CD8-positive, alpha-beta T cell (primary cell): ENCODE measurements at regions of chr12 and their contacts with region 1.

Region 1: GRCh38 chr12:84502907-84503787 is 409.5 kb downstream of the SLC6A15 start:
- DNase-seq: peak in 2 of 9 experiments; percentile 2 to 6
- ATAC-seq: no peak
- H3K4me3 ChIP-seq: no peak overlapping the region
- H3K4me3 Mint-ChIP-seq: no peak overlapping the region
- H3K27ac ChIP-seq: no peak overlapping the region
- H3K27ac Mint-ChIP-seq: no peak overlapping the region
- H3K4me1 ChIP-seq: no peaks in the 10 kb centered on the region
- H3K4me1 Mint-ChIP-seq: no peaks in the 10 kb centered on the region
- H3K27me3 ChIP-seq: no peaks in the 10 kb centered on the region
- H3K27me3 Mint-ChIP-seq: no peaks in the 10 kb centered on the region
- CTCF ChIP-seq: no peak

Region 2: DNA sequence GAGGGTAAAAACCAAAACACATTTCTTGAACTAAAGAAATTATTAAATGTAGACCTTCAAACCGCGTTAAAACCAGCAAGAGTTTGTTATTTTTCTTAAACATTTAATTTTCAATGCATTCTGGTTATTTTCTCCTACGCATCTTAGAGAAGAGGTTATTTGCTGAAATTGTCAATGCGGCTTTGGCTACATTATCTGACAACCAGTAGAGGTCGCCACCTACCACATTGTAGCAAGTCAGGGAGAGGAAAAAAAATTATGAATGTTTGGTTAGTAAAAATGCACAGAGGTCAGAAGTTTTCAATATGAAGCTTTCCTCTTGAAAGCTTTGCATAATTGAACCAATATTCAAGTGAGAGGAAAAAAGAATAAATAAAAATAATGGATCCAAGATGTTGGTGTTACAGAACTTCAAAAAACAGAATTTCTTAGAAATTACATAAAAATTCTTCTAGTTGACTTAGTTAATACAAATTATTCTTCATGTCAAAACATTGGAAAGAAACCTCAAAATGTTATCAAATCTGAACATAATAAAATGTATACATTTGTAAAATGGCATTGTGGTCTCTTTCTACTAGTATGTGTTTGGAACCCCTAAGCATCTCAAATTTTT is 1975.9 kb before region 1 on chr12:
- CTCF ChIA-PET with region 1: no interaction called
- POLR2A ChIA-PET with region 1: no interaction called
- intact Hi-C with region 1: loop called in 1 of 2 experiments (anchors 10 kb)
- DNase-seq: peak in 2 of 9 experiments; percentile 33 to 35
- ATAC-seq: no peak
- H3K4me3 ChIP-seq: no peak overlapping the region
- H3K4me3 Mint-ChIP-seq: no peak overlapping the region
- H3K27ac ChIP-seq: no peak overlapping the region
- H3K27ac Mint-ChIP-seq: no peak overlapping the region
- H3K4me1 ChIP-seq: no peaks in the 10 kb centered on the region
- H3K4me1 Mint-ChIP-seq: no peaks in the 10 kb centered on the region
- H3K27me3 ChIP-seq: no peaks in the 10 kb centered on the region
- H3K27me3 Mint-ChIP-seq: peaks cover 2% of the 10 kb centered on the region
- CTCF ChIP-seq: peak; percentile 71

Region 3: DNA sequence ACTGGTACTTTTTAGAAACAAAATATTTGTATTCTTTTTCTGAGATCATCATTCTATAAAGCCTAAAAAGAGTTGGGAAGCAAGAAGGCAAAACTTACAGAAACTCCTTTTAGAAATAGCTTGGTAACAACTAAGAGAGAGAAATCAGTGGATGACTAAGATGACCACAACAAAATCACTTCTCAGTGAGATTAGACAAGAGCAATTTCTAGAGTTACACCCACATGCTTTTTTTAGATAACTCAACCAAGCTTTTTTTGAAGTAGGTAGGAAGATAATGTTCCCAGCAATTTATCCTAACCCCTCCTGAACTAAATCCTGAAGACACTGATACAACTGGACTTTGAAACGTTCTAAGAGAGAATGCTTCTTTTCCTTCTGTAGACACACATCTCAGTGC is 166.9 kb before region 1 on chr12:
- CTCF ChIA-PET with region 1: no interaction called
- POLR2A ChIA-PET with region 1: no interaction called
- intact Hi-C with region 1: no loop called
- DNase-seq: no peak
- ATAC-seq: no peak
- H3K4me3 ChIP-seq: no peak overlapping the region
- H3K4me3 Mint-ChIP-seq: no peak overlapping the region
- H3K27ac ChIP-seq: no peak overlapping the region
- H3K27ac Mint-ChIP-seq: no peak overlapping the region
- H3K4me1 ChIP-seq: no peaks in the 10 kb centered on the region
- H3K4me1 Mint-ChIP-seq: no peaks in the 10 kb centered on the region
- H3K27me3 ChIP-seq: no peaks in the 10 kb centered on the region
- H3K27me3 Mint-ChIP-seq: no peaks in the 10 kb centered on the region
- CTCF ChIP-seq: no peak

Region 4: DNA sequence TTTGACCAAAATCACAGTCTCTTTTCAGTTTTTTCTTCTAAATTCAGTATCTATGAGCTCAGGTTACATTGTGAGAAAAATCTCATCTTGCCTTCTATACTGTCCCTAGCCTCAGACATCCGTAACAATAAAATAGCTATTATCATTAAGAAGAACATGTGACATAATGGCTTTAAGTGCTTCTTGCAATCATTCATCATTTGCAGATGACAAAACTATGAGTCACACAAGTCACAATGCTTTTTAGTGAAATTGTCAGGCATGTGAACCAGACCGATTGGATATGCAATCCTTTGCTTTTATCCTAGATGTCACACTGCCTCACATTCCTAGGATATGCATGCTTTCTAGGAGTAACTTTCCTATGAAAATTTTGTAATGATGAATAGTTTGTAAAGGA is 96.4 kb after region 1 on chr12:
- CTCF ChIA-PET with region 1: no interaction called
- POLR2A ChIA-PET with region 1: no interaction called
- intact Hi-C with region 1: no loop called
- DNase-seq: no peak
- ATAC-seq: no peak
- H3K4me3 ChIP-seq: no peak overlapping the region
- H3K4me3 Mint-ChIP-seq: no peak overlapping the region
- H3K27ac ChIP-seq: no peak overlapping the region
- H3K27ac Mint-ChIP-seq: no peak overlapping the region
- H3K4me1 ChIP-seq: no peaks in the 10 kb centered on the region
- H3K4me1 Mint-ChIP-seq: no peaks in the 10 kb centered on the region
- H3K27me3 ChIP-seq: no peaks in the 10 kb centered on the region
- H3K27me3 Mint-ChIP-seq: no peaks in the 10 kb centered on the region
- CTCF ChIP-seq: no peak